CD4-positive, alpha-beta memory T cell (primary cell): ENCODE measurements at regions of chr13 and their contacts with region 1.

Region 1: DNA sequence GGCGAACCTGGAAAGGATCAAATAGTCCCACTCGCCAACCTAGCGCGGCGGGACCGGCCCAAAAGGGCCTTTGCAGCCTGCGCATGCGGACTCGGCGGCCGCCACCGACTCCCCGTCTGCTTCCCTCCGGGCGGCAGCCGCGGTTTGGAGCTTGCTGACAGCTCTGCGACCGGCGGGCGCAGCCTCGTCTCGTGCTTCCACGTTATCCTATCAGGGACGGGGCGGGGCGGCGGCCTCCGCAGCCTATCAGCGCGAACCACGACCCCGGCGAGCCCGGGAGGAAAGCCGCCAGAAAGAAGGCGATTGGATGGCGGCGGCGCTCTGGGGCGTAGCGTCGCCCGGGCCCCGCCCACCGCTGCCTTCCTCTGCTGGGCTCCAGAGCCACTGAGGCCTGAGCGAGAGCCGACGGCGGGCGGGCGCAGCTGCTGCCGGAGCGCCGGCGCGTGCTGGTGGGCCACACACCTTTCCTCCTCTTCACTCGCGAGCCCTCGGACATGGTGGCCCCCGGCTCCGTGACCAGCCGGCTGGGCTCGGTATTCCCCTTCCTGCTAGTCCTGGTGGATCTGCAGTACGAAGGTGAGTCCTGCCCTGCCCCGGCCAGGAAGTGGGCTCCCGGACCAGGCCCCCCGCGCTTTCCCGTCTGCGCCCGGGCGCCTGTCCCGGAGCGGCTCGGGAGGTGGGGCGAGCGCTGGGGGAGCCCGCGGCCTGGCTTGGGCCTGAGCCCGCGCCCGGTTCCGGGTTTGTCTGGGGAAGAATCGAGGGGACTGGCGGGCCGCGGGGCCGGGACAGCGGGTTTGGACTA is at the start of gene DNAJC3:
- DNase-seq: peak; percentile 98 to 99 (median 98)
- H3K4me3 ChIP-seq: peak within 1 kb of the TSS; percentile 92 to 97
- H3K4me3 Mint-ChIP-seq: peak within 1 kb of the TSS; percentile 89 to 98 (median 96)
- H3K27ac ChIP-seq: peak within 1 kb of the TSS; percentile 87
- H3K27ac Mint-ChIP-seq: peak within 1 kb of the TSS; percentile 90 to 97 (median 96)
- H3K4me1 ChIP-seq: peaks cover 50% of the 10 kb centered on the region
- H3K4me1 Mint-ChIP-seq: peaks cover 48 to 80% (median 63%) of the 10 kb centered on the region in 4 donors
- H3K27me3 ChIP-seq: no peaks in the 10 kb centered on the region
- H3K27me3 Mint-ChIP-seq: no peaks in the 10 kb centered on the region
- total RNA-seq, gene DNAJC3: 28.9 to 31.1 TPM

Region 2: GRCh38 chr13:94549232-94550061 is 1127.5 kb before region 1 on chr13:
- CTCF ChIA-PET with region 1: no interaction called
- POLR2A ChIA-PET with region 1: interaction called, 3 read pairs
- intact Hi-C with region 1: loop called (anchors 2 kb)
- DNase-seq: peak; percentile 92 to 94 (median 93)
- H3K4me3 ChIP-seq: peak overlapping the region; percentile 63 to 98
- H3K4me3 Mint-ChIP-seq: peak overlapping the region; percentile 88 to 95 (median 93)
- H3K27ac ChIP-seq: peak overlapping the region; percentile 87
- H3K27ac Mint-ChIP-seq: peak overlapping the region; percentile 94 to 100 (median 96)
- H3K4me1 ChIP-seq: peaks cover 15% of the 10 kb centered on the region
- H3K4me1 Mint-ChIP-seq: peaks cover 11 to 26% (median 17%) of the 10 kb centered on the region in 4 donors
- H3K27me3 ChIP-seq: no peaks in the 10 kb centered on the region
- H3K27me3 Mint-ChIP-seq: peaks cover 2 to 5% of the 10 kb centered on the region in 2 donors

Region 3: GRCh38 chr13:95181586-95181985 is 495.4 kb before region 1 on chr13:
- CTCF ChIA-PET with region 1: no interaction called
- POLR2A ChIA-PET with region 1: no interaction called
- intact Hi-C with region 1: loop called (anchors 5 kb)
- DNase-seq: no peak
- H3K4me3 ChIP-seq: no peak overlapping the region
- H3K4me3 Mint-ChIP-seq: peak overlapping the region in 3 of 8 donors; percentile 17 to 69 (median 42)
- H3K27ac ChIP-seq: no peak overlapping the region
- H3K27ac Mint-ChIP-seq: peak overlapping the region in 4 of 7 donors; percentile 19 to 89 (median 74)
- H3K4me1 ChIP-seq: peaks cover 63% of the 10 kb centered on the region
- H3K4me1 Mint-ChIP-seq: peaks cover 43 to 72% (median 61%) of the 10 kb centered on the region in 4 donors
- H3K27me3 ChIP-seq: no peaks in the 10 kb centered on the region
- H3K27me3 Mint-ChIP-seq: no peaks in the 10 kb centered on the region

Region 4: DNA sequence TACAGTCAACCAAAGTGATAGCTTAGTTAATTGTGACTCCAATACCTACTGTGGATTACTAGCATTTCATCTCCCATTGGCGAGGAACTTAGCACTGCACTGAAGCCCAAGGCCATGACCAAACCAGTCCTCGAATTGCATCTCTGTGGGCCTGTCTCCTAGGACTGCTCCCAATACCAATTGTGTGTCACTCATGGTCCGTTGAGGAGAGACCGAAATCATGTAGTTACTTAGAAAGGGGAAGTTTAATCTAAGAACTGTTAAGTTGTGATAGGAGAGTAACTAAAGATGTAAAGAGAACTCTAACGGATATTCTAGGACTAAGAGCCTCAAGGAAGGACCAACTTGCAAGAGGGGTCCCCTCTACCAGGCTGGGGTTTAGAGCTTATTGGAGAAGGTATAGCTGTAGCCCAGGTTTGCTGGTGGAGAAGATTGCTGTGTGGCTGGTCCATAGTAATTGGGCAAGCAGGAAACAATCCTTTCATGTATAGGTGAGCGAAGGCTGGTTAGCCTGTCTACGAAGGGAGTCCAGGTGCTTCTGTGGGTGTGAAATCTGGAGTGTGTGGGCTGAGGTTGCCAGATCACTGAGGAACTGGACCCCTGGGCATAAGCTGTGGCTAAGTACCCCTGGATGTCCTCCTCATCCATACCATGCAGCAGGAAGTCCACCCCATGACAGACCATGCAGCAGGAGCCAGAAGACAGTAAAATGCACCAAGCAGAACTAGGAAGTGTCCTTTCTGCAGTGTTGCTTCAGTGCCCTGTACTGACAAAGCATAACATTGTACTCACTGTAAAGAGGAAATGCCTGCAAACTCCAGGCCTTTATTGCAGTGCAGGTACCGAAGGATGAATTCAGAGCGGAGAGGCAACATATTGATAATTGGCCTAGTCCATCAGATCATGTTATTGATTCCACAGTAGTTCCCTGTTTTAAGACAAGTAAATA is 30.8 kb after region 1 on chr13:
- CTCF ChIA-PET with region 1: no interaction called
- POLR2A ChIA-PET with region 1: interaction called, 4 read pairs
- intact Hi-C with region 1: loop called (anchors 2 kb)
- DNase-seq: no peak
- H3K4me3 ChIP-seq: no peak overlapping the region
- H3K4me3 Mint-ChIP-seq: no peak overlapping the region
- H3K27ac ChIP-seq: no peak overlapping the region
- H3K27ac Mint-ChIP-seq: peak overlapping the region in 5 of 7 donors; percentile 29 to 82 (median 47)
- H3K4me1 ChIP-seq: peaks cover 31% of the 10 kb centered on the region
- H3K4me1 Mint-ChIP-seq: peaks cover 36 to 55% (median 45%) of the 10 kb centered on the region in 4 donors
- H3K27me3 ChIP-seq: no peaks in the 10 kb centered on the region
- H3K27me3 Mint-ChIP-seq: no peaks in the 10 kb centered on the region

Region 5: DNA sequence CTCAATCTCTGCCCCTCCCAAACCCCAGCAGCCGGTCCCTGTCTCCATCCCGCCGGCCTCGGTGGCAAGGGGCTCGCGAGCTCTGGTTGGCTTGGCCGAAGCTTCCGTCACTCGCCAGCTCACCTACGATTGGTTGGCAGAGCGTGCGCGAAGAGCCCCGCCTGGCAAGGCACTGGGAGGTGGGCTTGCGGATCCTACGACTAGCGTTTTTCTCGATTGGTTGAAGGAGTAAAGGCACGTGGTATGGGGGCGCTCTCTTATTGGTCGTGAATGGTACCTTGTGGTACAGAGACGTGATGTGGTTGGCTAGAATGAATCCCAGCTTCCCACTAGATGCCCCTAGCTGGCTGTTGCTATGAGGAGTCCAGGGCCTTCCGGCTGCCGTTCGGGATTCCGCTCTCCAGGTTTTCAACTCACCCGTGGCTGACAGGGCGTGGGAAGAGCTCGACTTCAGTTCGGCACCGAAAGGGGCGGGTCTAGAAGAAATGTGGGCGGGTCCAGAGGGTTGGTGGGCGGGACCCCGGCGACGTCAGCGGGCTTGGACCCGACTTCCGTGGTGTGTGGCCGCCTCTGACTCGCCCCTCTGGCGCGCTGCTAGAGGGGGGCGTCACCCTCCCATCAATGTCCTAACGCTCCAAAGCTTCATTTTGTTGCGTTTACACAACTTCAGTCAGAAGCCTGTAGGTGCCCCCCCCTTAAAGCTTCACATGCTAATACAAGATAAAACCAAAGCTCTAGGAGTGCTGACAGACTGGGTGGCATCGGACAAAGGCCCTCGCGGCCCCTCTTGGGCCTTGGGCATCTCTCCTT is 1756.2 kb after region 1 on chr13:
- CTCF ChIA-PET with region 1: no interaction called
- POLR2A ChIA-PET with region 1: interaction called, 15 read pairs
- intact Hi-C with region 1: loop called (anchors 1 kb)
- DNase-seq: peak; percentile 99 to 100 (median 99)
- H3K4me3 ChIP-seq: peak overlapping the region; percentile 93 to 97
- H3K4me3 Mint-ChIP-seq: peak overlapping the region; percentile 96 to 100 (median 98)
- H3K27ac ChIP-seq: peak overlapping the region; percentile 99
- H3K27ac Mint-ChIP-seq: peak overlapping the region; percentile 97 to 100 (median 99)
- H3K4me1 ChIP-seq: peaks cover 37% of the 10 kb centered on the region
- H3K4me1 Mint-ChIP-seq: peaks cover 20 to 41% (median 23%) of the 10 kb centered on the region in 4 donors
- H3K27me3 ChIP-seq: peaks cover 5% of the 10 kb centered on the region
- H3K27me3 Mint-ChIP-seq: peaks cover 0 to 4% of the 10 kb centered on the region in 2 donors